HEK293 (cell line): ENCODE measurements at regions of chr5 and their contacts with region 1.

Region 1: DNA sequence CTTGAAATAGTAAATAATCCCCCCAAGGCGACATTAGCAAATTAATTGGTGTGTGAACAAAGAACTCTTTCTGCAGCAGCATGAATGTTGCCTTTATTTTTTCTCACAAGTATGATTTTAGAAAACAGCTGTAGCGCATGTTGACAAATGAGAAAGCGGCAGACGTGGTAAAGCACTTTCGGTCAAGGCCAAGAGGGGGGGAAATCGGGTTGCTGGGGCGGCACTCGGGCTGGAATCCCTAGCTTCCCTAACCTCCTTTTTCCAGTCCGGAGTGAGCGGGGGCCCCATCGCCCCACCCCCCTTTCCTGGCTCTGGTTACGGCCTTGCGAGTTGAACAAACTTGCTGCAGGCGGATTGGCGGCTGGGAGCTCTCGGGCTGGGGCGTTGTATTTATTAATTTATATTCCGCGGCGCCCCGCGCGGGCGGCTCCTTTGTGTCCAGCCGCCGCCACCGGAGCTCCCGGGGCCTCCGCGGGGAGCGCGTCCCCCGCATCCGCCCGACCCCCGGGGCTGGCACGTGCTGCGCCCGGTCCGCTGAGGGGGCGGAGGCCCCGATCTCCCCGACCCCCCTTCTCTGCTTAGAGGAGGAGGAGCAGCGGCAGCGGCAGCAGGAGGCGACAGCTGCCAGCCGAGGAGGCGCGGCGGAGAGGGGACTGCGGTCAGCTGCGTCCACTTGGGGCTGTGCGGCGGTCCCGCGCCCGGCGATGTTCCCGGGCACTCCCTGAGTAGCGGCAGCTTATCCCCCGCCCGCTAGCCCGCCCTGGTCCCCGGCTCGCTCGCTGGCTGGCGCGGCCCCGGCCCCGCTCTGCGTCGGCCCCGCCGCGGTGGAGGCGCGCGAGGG is at the start of gene RHOBTB3:
- H3K4me3 ChIP-seq: peak within 1 kb of the TSS; percentile 93
- H3K27ac ChIP-seq: peak within 1 kb of the TSS; percentile 93
- H3K4me1 ChIP-seq: peaks cover 8% of the 10 kb centered on the region
- CTCF ChIP-seq: no peak; the same call in 1 of the 2 replicates

Region 2: DNA sequence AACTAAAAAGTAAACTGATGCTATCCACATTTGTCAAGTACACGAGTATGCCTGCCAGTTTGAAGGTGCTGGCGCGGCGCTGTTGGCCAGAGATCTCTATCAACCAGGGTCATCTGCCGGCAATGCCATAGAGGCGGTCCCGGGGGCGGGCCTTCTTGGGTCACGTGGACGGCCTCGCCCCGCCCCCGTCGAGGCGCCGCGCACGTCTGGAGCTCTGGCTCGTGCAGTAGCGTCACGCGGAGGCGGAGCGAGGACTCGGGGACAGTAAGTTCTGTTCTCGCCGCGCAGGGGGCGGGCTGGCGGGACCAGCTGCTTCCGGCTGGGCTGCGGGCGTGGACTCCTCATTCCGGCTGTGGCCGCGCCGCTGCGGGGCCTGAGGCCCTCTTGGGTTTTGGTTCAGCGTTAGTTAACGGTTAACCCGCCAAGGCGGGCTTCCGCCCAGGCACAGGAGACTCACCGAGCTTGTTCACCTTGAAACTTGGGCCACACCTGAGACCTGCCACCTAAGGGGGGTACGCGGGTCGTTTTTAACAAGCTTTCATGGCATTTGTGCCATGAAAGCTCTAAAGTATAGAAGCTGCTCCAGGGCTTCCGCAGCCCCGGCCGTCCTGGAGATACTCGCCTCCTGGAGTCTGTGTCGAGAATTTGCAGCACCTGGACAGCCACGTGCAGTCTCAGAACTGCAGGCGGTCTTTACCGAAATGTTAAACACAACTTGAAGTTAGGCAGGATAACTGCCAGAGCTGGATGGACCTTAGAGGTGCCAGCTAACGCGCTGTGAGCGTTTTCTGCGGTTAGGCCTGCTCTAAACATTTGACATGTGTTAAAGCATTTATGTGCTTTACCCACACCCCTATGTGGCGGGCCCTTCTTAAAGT is 84.2 kb before region 1 on chr5 and contains the start of gene RFESD:
- CTCF ChIA-PET with region 1: interaction called, 6 read pairs
- POLR2A ChIA-PET with region 1: interaction called, 34 read pairs
- H3K4me3 ChIP-seq: peak within 1 kb of the TSS; percentile 40
- H3K27ac ChIP-seq: peak within 1 kb of the TSS; percentile 79
- H3K4me1 ChIP-seq: peaks cover 5% of the 10 kb centered on the region; the same call in 1 of the 2 replicates
- CTCF ChIP-seq: 0 out of 2 replicates have a peak, but pooled peaks have one; percentile 37

Region 3: DNA sequence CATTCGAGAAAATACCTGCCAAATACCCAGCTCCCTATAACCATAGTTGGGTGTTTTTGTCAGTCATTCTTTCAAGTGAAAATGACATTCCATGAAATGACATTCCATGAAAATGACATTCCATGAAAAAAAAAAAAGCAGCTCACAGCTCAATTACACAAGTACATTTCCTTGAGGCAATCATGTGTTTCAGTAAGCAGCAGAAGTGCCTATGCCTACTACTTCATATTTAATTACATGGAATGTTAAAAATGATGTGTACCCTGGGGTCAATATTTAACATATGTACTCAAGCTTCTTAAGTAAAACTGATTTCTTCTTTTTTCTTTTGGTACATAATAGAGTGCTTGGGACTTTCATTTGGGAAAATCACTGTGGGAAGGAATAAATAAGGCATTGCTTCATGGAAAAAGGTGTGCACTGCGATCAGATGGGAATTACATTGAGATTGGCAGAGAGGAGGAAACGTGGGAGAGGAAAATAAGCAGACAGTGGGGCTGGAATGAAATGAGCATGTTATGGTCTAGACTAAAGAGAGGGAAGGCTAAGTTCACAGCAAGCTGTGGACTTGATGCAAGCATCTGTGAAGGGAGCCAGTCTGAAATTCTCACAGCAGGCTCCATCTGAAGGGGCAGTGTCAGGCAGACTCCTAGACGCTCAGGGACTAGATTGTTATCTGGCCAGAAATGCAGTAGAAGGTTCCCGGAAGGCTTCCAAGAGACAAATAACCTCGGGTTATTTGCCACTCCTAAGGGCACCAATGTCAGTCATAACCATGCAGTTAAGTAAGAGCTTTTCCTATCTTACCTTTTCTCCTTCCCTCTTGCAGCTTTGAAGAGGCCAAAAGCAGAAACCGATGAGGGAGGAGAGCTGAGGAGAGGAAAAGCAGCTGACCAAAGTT is 32.9 kb before region 1 on chr5:
- CTCF ChIA-PET with region 1: interaction called, 3 read pairs
- POLR2A ChIA-PET with region 1: interaction called, 12 read pairs
- H3K4me3 ChIP-seq: no peak overlapping the region
- H3K27ac ChIP-seq: no peak overlapping the region
- H3K4me1 ChIP-seq: 0 out of 2 replicates have a peak, but pooled peaks cover 6% of the 10 kb centered on the region
- CTCF ChIP-seq: no peak

Region 4: GRCh38 chr5:95712347-95712958 is 18.5 kb before region 1 on chr5:
- CTCF ChIA-PET with region 1: interaction called, 4 read pairs
- POLR2A ChIA-PET with region 1: interaction called, 26 read pairs
- H3K4me3 ChIP-seq: no peak overlapping the region
- H3K27ac ChIP-seq: peak overlapping the region; percentile 50; the same call in 1 of the 2 replicates
- H3K4me1 ChIP-seq: peaks cover 4% of the 10 kb centered on the region; the same call in 1 of the 2 replicates
- CTCF ChIP-seq: no peak

Region 5: GRCh38 chr5:96125231-96125891 is 394.4 kb after region 1 on chr5:
- CTCF ChIA-PET with region 1: no interaction called
- POLR2A ChIA-PET with region 1: no interaction called
- H3K4me3 ChIP-seq: no peak overlapping the region
- H3K27ac ChIP-seq: no peak overlapping the region
- H3K4me1 ChIP-seq: peaks cover 7% of the 10 kb centered on the region; the same call in 1 of the 2 replicates
- CTCF ChIP-seq: no peak